RWPE1 (cell line): ENCODE measurements at regions of chr1 and their contacts with region 1.

Region 1: GRCh38 chr1:160451119-160451858 is 50.9 kb downstream of the VANGL2 start:
- DNase-seq: no peak
- H3K27ac ChIP-seq: no peak overlapping the region
- CTCF ChIP-seq: no peak

Region 2: DNA sequence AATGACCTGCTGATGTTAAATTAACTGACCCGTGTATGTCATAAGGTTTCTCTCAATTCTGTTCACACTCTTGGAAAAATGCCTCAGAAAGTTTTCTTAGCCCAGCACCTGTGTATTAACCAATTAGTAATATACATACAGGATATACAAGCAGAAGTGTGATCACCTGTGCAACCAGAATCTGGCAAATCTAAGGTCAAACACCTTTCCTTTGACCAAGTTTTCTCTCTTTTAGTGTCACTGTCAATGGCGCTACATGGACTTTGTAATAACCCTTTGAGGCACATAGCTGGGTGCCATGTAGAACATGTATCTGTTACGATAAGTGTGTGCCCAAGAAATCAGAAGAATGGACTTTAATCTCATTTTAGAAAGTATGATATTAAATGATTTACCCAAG is 107.0 kb before region 1 on chr1:
- CTCF ChIA-PET with region 1: no interaction called
- POLR2A ChIA-PET with region 1: interaction called, 11 read pairs
- DNase-seq: no peak
- H3K27ac ChIP-seq: no peak overlapping the region
- CTCF ChIP-seq: no peak

Region 3: DNA sequence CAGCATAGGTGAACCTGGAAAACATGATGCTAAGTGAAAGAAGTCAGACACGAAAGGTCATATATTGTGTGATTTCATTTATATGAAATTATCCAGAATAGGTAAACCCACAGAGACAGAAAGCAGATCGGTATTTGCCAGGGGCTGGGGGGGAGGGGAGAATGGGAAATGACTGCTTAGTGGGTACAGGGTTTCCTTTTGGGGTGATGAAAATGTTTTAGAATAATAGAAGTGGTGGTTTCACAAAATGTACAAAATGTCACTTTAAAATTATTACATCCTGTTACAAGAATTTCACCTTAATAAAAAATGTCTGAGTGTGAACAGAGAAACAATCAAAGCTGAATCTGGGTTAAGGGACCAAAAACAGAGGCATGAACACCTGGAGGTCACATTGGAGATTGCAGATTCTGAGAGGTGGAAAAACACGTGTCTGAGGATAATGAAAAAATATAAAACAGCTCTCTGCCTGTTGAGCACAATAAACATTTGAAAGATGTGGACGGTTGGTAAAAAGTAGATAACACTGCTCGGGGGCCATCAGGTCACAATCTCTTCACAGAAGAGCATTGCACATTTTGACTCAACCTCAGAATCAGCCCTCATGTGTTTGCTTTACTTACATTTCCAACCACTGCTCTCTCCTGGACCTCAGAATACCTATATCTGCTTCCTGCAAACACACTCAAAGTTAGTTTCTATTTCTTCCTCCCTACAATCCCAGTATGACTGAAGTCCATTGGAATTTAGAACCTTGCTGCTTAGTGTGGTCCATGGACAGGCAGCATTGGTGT is 68.5 kb after region 1 on chr1:
- CTCF ChIA-PET with region 1: no interaction called
- POLR2A ChIA-PET with region 1: no interaction called
- DNase-seq: peak; percentile 20
- H3K27ac ChIP-seq: no peak overlapping the region
- CTCF ChIP-seq: no peak

Region 4: DNA sequence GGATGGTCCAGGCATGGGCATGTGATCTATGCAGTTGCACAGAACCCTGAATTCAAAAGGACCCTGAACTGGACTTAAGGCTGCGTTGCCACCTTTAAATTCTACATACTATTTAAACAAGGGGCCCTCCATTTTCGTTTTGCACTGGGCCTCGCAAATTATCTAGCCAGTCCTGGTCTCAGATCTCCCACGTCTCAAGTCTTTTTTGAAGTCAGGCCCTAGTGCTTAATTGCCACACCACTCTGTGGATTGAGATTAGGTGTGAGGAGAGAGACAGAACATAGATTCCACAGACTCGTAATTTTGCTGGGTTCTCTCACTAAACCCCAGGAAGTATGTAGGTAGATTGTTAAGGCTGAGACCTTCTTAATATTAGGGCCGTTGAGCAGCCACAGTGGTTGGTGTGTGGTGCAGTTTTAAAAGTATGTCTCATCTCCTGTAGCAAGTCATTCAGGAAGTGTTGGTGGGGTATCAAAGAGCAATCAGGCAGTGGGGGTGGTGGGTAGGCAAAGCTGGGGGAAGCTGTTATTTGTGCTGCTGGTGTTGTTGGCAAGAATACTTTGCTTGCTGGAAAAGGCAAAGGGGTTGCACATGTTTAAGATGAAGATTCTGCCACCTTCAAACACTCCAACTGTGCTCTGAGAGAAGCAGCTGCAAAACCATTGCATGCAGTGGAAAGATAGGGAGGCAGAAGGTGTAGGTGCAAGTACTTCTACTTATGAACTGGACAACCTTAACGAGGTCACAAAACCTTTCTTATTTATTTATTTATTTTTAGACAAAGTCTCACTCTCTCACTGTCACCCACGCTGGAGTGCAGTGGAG is 116.8 kb after region 1 on chr1:
- CTCF ChIA-PET with region 1: no interaction called
- POLR2A ChIA-PET with region 1: no interaction called
- DNase-seq: no peak
- H3K27ac ChIP-seq: no peak overlapping the region
- CTCF ChIP-seq: no peak